CD4-positive, alpha-beta memory T cell (primary cell): ENCODE measurements at regions of chr20 and their contacts with region 1.

Region 1: GRCh38 chr20:43456809-43457639 is 672 bp upstream of the SRSF6 start:
- DNase-seq: peak in 4 of 5 donors; percentile 88 to 94 (median 90)
- H3K4me3 ChIP-seq: peak overlapping the region; percentile 52 to 74
- H3K4me3 Mint-ChIP-seq: peak overlapping the region; percentile 87 to 99 (median 96)
- H3K27ac ChIP-seq: peak overlapping the region; percentile 100
- H3K27ac Mint-ChIP-seq: peak overlapping the region; percentile 93 to 100 (median 99)
- H3K4me1 ChIP-seq: peaks cover 32% of the 10 kb centered on the region
- H3K4me1 Mint-ChIP-seq: peaks cover 20 to 49% (median 29%) of the 10 kb centered on the region in 4 donors
- H3K27me3 ChIP-seq: no peaks in the 10 kb centered on the region
- H3K27me3 Mint-ChIP-seq: peaks cover 4 to 7% of the 10 kb centered on the region in 2 donors

Region 2: DNA sequence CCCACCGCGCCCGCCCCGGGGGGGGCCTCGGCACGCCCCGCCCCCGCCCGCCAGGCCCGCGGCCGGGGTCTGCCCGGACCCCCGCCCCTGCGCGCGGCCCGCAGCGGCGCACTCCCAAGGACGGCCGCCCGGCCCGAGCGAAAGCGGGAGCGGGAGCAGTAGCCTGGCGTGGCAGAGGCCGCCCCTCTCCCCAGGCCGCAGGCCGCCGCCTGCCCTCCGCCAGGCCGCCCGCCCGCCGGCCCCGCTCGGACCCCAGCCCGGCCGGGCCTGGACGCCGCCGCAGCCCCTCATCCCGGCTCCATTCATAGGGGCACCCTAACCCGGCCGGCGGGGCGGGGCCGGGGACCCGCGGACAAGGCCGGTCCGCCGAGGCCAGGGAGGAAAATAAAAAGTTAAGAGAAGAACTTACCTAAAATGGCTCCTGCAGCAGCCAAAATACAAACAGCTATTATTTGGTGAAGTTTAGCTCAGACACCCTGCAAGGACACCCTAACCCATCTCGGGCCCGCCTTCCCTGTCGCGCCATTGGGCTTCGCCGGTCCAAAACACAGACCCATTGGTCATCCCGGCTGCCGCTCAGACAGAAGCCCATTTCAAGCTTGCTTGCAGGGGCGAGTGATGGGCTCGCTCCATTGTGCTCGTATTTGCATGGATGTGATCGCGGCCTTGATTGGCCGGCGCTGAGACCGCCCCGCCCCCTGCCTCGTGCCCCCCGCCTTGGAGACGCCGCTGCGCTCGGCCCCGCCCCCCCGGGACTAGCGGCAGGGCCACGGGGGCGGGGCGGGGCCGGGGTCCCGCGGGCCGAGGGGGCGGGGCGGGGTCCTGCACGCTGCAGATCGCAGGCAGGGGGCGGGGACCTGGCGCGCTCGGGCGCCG is 1838.9 kb before region 1 on chr20 and contains the start of gene CHD6:
- CTCF ChIA-PET with region 1: no interaction called
- POLR2A ChIA-PET with region 1: no interaction called
- intact Hi-C with region 1: loop called (anchors 5 kb)
- DNase-seq: peak; percentile 99 to 100 (median 100)
- H3K4me3 ChIP-seq: peak within 1 kb of the TSS; percentile 7 to 69
- H3K4me3 Mint-ChIP-seq: peak within 1 kb of the TSS; percentile 92 to 95 (median 94)
- H3K27ac ChIP-seq: peak within 1 kb of the TSS; percentile 41
- H3K27ac Mint-ChIP-seq: peak within 1 kb of the TSS; percentile 88 to 96 (median 91)
- H3K4me1 ChIP-seq: peaks cover 41% of the 10 kb centered on the region
- H3K4me1 Mint-ChIP-seq: peaks cover 33 to 51% (median 38%) of the 10 kb centered on the region in 4 donors
- H3K27me3 ChIP-seq: no peaks in the 10 kb centered on the region
- H3K27me3 Mint-ChIP-seq: no peaks in the 10 kb centered on the region
- total RNA-seq, gene CHD6: 93.2 to 96.8 TPM

Region 3: GRCh38 chr20:41693136-41693979 is 1763.7 kb before region 1 on chr20:
- CTCF ChIA-PET with region 1: no interaction called
- POLR2A ChIA-PET with region 1: interaction called, 10 read pairs
- intact Hi-C with region 1: no loop called
- DNase-seq: peak; percentile 83 to 87 (median 85)
- H3K4me3 ChIP-seq: peak overlapping the region; percentile 75 to 76
- H3K4me3 Mint-ChIP-seq: peak overlapping the region; percentile 86 to 97 (median 94)
- H3K27ac ChIP-seq: peak overlapping the region; percentile 85
- H3K27ac Mint-ChIP-seq: peak overlapping the region; percentile 82 to 98 (median 95)
- H3K4me1 ChIP-seq: peaks cover 12% of the 10 kb centered on the region
- H3K4me1 Mint-ChIP-seq: peaks cover 7 to 23% (median 16%) of the 10 kb centered on the region in 4 donors
- H3K27me3 ChIP-seq: no peaks in the 10 kb centered on the region
- H3K27me3 Mint-ChIP-seq: peaks cover 4% of the 10 kb centered on the region in 2 donors

Region 4: GRCh38 chr20:43514062-43514999 is 57.3 kb after region 1 on chr20:
- CTCF ChIA-PET with region 1: interaction called, 8 read pairs
- POLR2A ChIA-PET with region 1: interaction called, 21 read pairs
- intact Hi-C with region 1: loop called (anchors 1 kb)
- DNase-seq: peak; percentile 88 to 96 (median 92)
- H3K4me3 ChIP-seq: peak overlapping the region in 1 of 2 donors; percentile 66
- H3K4me3 Mint-ChIP-seq: peak overlapping the region; percentile 89 to 96 (median 92)
- H3K27ac ChIP-seq: peak overlapping the region; percentile 50
- H3K27ac Mint-ChIP-seq: peak overlapping the region; percentile 73 to 94 (median 91)
- H3K4me1 ChIP-seq: peaks cover 12% of the 10 kb centered on the region
- H3K4me1 Mint-ChIP-seq: peaks cover 6 to 24% (median 13%) of the 10 kb centered on the region in 4 donors
- H3K27me3 ChIP-seq: no peaks in the 10 kb centered on the region
- H3K27me3 Mint-ChIP-seq: peaks cover 0 to 3% of the 10 kb centered on the region in 2 donors

Region 5: GRCh38 chr20:43590392-43591323 is 133.6 kb after region 1 on chr20 and contains the start of gene IFT52:
- CTCF ChIA-PET with region 1: no interaction called
- POLR2A ChIA-PET with region 1: interaction called, 29 read pairs
- intact Hi-C with region 1: loop called (anchors 1 kb)
- DNase-seq: peak; percentile 85 to 89 (median 88)
- H3K4me3 ChIP-seq: peak within 1 kb of the TSS; percentile 75 to 90
- H3K4me3 Mint-ChIP-seq: peak within 1 kb of the TSS; percentile 88 to 96 (median 94)
- H3K27ac ChIP-seq: peak within 1 kb of the TSS; percentile 71
- H3K27ac Mint-ChIP-seq: peak within 1 kb of the TSS; percentile 93 to 99 (median 97)
- H3K4me1 ChIP-seq: peaks cover 18% of the 10 kb centered on the region
- H3K4me1 Mint-ChIP-seq: peaks cover 7 to 22% (median 15%) of the 10 kb centered on the region in 4 donors
- H3K27me3 ChIP-seq: no peaks in the 10 kb centered on the region
- H3K27me3 Mint-ChIP-seq: peaks cover 2 to 6% of the 10 kb centered on the region in 2 donors
- total RNA-seq, gene IFT52: 13.3 to 18.2 TPM

Region 6: DNA sequence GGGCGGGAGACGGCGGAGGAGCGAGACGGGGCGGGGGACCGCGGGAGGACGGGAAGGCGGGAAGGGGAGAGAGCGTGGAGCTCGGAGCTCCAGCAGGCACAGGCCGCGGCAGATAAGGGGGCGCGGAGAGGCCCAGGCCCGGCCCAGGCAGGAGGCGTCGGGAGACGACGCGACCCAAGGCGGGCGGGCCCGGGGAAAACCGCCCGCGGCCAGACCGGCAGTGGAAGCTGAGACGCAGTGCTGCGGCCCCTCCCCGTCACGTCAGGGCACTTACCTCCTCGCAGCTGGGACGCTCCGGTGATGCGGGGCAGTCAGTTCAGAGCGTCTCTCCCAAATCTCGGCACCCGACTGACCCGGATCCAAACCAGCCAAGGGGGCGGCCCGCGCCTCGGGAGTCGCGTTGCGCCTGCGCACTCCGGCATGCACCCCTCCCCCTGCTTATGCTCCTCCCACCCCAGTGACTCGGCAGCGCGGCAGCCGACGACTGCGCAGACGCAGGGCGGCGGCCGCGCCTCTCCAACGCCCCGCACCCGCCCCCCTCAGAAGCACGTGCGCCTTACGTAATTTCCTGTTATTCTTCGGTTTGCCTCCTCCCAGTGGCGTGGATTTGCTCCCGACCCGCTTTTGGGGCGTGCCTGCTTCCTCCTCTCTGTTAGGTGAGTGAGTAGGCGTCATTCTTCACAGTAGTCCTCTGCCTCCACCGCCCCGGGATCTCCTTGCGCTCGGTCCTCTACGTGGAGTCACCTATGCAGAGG is 753.6 kb after region 1 on chr20 and contains the start of gene OSER1:
- CTCF ChIA-PET with region 1: no interaction called
- POLR2A ChIA-PET with region 1: no interaction called
- intact Hi-C with region 1: loop called (anchors 1 kb)
- DNase-seq: peak; percentile 99
- H3K4me3 ChIP-seq: peak within 1 kb of the TSS; percentile 77 to 78
- H3K4me3 Mint-ChIP-seq: peak within 1 kb of the TSS; percentile 85 to 99 (median 94)
- H3K27ac ChIP-seq: peak within 1 kb of the TSS; percentile 98
- H3K27ac Mint-ChIP-seq: peak within 1 kb of the TSS; percentile 90 to 100 (median 98)
- H3K4me1 ChIP-seq: peaks cover 53% of the 10 kb centered on the region
- H3K4me1 Mint-ChIP-seq: peaks cover 42 to 79% (median 56%) of the 10 kb centered on the region in 4 donors
- H3K27me3 ChIP-seq: no peaks in the 10 kb centered on the region
- H3K27me3 Mint-ChIP-seq: no peaks in the 10 kb centered on the region
- total RNA-seq, gene OSER1: 35.5 to 36.6 TPM